Panc1 (cell line): ENCODE measurements at regions of chr1 and their contacts with region 1.

Region 1: DNA sequence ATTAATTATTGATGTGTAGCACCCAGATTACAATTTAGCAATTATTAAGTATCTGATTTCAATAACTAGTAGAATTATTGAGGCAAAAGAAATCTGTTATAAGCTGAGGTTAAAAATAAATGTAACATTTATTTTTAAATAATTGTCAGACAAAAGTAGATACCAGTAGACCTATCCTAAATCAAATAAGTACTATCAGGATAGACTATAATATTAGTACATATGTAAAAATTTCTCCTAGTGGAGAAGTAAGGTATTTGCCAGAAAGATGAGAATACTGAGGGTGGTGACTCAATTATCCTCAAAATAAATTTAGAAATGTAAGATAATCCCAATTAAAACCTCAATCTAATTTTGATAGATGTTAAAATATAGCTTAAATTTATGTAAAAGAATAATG is 377.8 kb upstream of the CHRM3 start:
- DNase-seq: no peak
- ATAC-seq: no peak
- H3K4me3 ChIP-seq: no peak overlapping the region
- H3K27ac ChIP-seq: no peak overlapping the region
- H3K4me1 ChIP-seq: no peaks in the 10 kb centered on the region
- H3K27me3 ChIP-seq: no peaks in the 10 kb centered on the region
- CTCF ChIP-seq: no peak

Region 2: GRCh38 chr1:238960071-238960470 is 48.5 kb before region 1 on chr1:
- CTCF ChIA-PET with region 1: no interaction called
- POLR2A ChIA-PET with region 1: no interaction called
- in situ Hi-C with region 1: no loop called
- intact Hi-C with region 1: no loop called
- DNase-seq: no peak
- ATAC-seq: no peak
- H3K4me3 ChIP-seq: no peak overlapping the region
- H3K27ac ChIP-seq: no peak overlapping the region
- H3K4me1 ChIP-seq: no peaks in the 10 kb centered on the region
- H3K27me3 ChIP-seq: no peaks in the 10 kb centered on the region
- CTCF ChIP-seq: no peak

Region 3: GRCh38 chr1:239164451-239165180 is 156.0 kb after region 1 on chr1:
- CTCF ChIA-PET with region 1: no interaction called
- POLR2A ChIA-PET with region 1: no interaction called
- in situ Hi-C with region 1: no loop called
- intact Hi-C with region 1: no loop called
- DNase-seq: no peak
- ATAC-seq: no peak
- H3K4me3 ChIP-seq: no peak overlapping the region
- H3K27ac ChIP-seq: no peak overlapping the region
- H3K4me1 ChIP-seq: no peaks in the 10 kb centered on the region
- H3K27me3 ChIP-seq: no peaks in the 10 kb centered on the region
- CTCF ChIP-seq: no peak

Region 4: GRCh38 chr1:239219679-239220078 is 211.1 kb after region 1 on chr1:
- CTCF ChIA-PET with region 1: no interaction called
- POLR2A ChIA-PET with region 1: no interaction called
- in situ Hi-C with region 1: no loop called
- intact Hi-C with region 1: loop called (anchors 10 kb)
- DNase-seq: no peak
- ATAC-seq: no peak
- H3K4me3 ChIP-seq: no peak overlapping the region
- H3K27ac ChIP-seq: no peak overlapping the region
- H3K4me1 ChIP-seq: no peaks in the 10 kb centered on the region
- H3K27me3 ChIP-seq: no peaks in the 10 kb centered on the region
- CTCF ChIP-seq: no peak